ENCODE measurements at regions of chr10 and their contacts with region 1.

Region 1: DNA sequence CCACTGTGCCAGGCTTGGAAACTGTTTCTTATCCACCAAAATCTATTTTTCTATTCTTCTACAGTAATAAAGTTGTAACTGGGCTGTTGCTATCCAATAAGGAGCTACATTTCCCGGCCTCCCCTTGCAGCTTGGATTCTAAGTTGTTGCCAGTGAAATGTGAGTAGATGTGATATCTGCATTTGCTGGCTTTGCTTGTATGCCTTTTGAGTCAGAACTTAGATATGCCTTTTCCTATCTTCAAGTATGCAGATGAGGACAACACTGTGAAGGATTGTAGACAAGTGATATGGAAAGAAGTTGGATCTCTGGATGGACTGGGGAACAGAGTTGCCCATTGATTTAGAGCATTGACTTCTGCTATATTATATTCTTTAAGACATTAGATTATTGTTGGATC is 236.9 kb downstream of the REEP3 start:
- DNase-seq: no peak
- H3K4me3 ChIP-seq: no peak overlapping the region
- H3K27ac ChIP-seq: no peak overlapping the region
- H3K4me1 ChIP-seq: no peaks in the 10 kb centered on the region
- H3K27me3 ChIP-seq: no peaks in the 10 kb centered on the region
- CTCF ChIP-seq: no peak

Region 2: GRCh38 chr10:62121187-62121530 is 1636.9 kb before region 1 on chr10:
- intact Hi-C with region 1: loop called (anchors 5 kb)
- DNase-seq: no peak
- H3K4me3 ChIP-seq: no peak overlapping the region
- H3K27ac ChIP-seq: no peak overlapping the region
- H3K4me1 ChIP-seq: no peaks in the 10 kb centered on the region
- H3K27me3 ChIP-seq: no peaks in the 10 kb centered on the region
- CTCF ChIP-seq: no peak

Region 3: DNA sequence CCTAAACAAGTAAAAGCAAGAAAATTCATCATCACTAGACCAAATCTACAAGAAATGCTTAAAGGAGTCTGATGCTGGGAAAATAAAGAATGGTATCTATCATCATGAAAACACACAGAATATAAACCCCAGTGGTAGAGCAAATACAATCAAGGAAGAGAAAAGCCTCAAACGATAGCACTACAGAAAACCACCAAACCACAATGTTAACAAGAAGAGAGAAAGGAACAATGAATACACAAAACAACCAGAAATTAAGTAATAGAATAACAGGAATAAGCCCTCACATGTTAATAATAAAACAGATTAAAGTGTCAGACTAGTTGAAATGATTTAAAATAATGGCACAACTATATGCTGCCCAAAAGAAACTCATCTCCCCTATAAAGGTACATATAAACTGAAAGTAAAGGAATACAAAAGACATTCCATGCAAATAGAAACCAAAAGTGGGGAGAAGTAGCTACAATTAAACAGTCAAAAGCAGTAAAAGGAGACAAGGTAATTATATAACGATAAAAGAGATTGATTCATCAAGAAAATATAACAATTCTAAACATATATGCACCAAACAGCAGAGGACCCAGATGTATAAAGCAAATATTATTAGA is 369.6 kb before region 1 on chr10:
- intact Hi-C with region 1: no loop called
- DNase-seq: no peak
- H3K4me3 ChIP-seq: no peak overlapping the region
- H3K27ac ChIP-seq: no peak overlapping the region
- H3K4me1 ChIP-seq: peaks cover 0 to 12% (median 0%) of the 10 kb centered on the region in 4 donors
- H3K27me3 ChIP-seq: no peaks in the 10 kb centered on the region
- CTCF ChIP-seq: no peak

Region 4: DNA sequence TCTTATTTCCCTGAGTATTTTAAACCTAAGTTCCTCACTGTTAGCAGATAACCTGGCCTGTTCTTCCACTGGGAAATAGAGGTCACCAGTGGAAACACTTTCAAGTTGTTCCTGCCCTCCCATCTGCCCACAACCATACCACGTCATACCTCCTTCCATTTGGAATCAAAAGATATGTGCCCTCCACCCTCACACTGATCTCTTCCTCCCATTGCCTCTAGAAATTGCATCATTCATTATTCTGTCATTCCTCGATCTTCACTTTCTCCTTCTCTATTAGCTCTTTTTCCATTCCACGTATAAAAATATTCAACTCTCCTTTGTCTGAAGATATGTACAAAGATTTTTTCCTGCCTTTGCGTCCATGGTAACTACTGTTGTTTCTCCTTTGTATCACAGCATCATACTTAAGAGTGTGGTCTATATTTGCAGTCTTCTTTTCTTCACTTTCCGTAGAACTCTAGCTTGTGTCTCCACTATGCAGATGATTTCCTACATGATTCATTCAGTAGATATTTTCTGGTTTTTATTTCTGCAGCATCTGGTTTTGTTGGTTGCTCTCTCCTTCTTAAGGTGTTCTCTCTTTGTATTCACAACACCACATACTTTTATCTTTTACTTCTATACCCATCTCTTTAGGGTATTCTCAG is 75.5 kb after region 1 on chr10:
- intact Hi-C with region 1: no loop called
- DNase-seq: no peak
- H3K4me3 ChIP-seq: no peak overlapping the region
- H3K27ac ChIP-seq: no peak overlapping the region
- H3K4me1 ChIP-seq: no peaks in the 10 kb centered on the region
- H3K27me3 ChIP-seq: peaks cover 0 to 4% of the 10 kb centered on the region in 2 donors
- CTCF ChIP-seq: no peak